GM12878 (cell line): ENCODE measurements at regions of chr9 and their contacts with region 1.

Region 1: GRCh38 chr9:137034863-137035761 is 3.2 kb upstream of the FUT7 start:
- DNase-seq: peak; percentile 55
- ATAC-seq: peak; percentile 89
- H3K4me3 ChIP-seq: peak overlapping the region; percentile 36; the same call in 1 of the 2 replicates
- H3K27ac ChIP-seq: no peak overlapping the region; the same call in 1 of the 2 replicates
- H3K4me1 ChIP-seq: peaks cover 34% of the 10 kb centered on the region
- H3K27me3 ChIP-seq: no peaks in the 10 kb centered on the region
- CTCF ChIP-seq: peak; percentile 90 to 97 (median 97)
- EP300 ChIP-seq: no peak; a peak in 1 of 4 replicates
- POLR2A ChIP-seq: no peak
- RAD21 ChIP-seq: peak; percentile 95

Region 2: DNA sequence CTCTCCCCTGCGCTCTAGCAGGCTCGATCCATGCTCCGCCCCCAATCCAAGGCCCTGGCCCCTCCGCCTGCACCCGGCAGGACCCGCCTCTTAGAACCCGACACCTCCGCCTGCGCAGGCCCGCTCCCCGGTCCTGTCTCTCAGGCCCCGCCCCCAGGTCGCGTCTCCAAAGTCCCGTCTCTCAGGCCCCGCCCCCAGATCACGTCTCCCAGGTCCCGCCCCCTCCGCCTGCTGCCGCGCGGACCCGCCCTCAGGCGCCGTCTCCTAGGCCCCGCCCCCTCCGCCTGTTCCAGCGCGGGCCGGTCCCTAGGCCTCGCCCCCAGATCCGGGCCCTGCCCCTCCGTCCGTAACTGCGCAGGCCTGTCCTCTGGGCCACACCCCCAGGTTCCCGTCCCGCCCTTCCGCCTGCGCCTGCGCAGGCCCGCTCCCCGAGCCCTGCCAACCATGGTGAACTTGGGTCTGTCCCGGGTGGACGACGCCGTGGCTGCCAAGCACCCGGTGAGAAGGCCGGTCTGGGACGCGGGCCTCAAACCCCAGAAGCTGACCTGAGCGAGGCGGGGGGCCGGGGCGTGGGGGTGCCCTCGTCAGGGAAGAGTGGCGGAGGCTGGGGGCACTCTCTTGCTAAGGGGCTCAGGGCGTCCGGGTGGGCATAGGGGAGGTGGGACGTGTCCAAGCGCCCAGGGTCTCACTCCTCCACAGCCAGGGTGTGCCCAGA is 244.0 kb before region 1 on chr9 and contains the start of gene TMEM141:
- CTCF ChIA-PET with region 1: interaction called, 61 read pairs
- POLR2A ChIA-PET with region 1: interaction called, 4 read pairs
- RAD21 ChIA-PET with region 1: interaction called, 28 read pairs
- SMC1A ChIA-PET with region 1: interaction called, 20 read pairs
- in situ Hi-C with region 1: loop called (anchors 5 kb)
- intact Hi-C with region 1: loop called (anchors 1 kb)
- DNase-seq: peak; percentile 92
- ATAC-seq: peak; percentile 94
- H3K4me3 ChIP-seq: peak within 1 kb of the TSS; percentile 77
- H3K27ac ChIP-seq: peak within 1 kb of the TSS; percentile 82
- H3K4me1 ChIP-seq: peaks cover 10% of the 10 kb centered on the region
- H3K27me3 ChIP-seq: no peaks in the 10 kb centered on the region
- CTCF ChIP-seq: no peak
- EP300 ChIP-seq: no peak
- POLR2A ChIP-seq: peak; percentile 83
- RAD21 ChIP-seq: no peak
- polyA plus RNA-seq, gene TMEM141: 7.8 to 13.3 TPM

Region 3: DNA sequence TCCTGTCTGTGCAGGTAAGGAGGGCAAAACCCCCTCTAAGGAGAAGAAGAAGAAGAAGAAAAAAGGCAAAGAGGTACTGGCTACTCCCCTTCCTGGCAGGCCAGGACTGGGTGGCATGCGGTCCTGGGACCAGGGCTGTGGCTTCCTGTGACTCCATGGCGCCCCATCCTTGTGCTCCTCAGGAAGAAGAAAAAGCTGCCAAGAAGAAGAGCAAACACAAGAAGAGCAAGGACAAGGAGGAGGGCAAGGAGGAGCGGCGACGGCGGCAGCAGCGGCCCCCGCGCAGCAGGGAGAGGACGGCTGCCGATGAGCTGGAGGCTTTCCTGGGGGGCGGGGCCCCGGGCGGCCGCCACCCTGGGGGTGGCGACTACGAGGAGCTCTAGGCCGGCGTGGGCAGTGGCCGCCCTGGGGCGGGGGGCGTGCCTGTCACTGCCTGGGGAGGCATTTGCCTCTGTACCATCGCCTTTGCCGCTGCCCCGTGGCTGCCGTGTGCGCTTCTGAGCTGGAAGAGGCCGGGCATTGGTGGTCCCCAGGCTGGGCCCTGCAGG is 194.9 kb before region 1 on chr9:
- CTCF ChIA-PET with region 1: interaction called, 35 read pairs
- POLR2A ChIA-PET with region 1: no interaction called
- RAD21 ChIA-PET with region 1: interaction called, 14 read pairs
- SMC1A ChIA-PET with region 1: no interaction called
- in situ Hi-C with region 1: no loop called
- intact Hi-C with region 1: loop called (anchors 5 kb)
- DNase-seq: no peak
- ATAC-seq: no peak
- H3K4me3 ChIP-seq: no peak overlapping the region
- H3K27ac ChIP-seq: no peak overlapping the region
- H3K4me1 ChIP-seq: peaks cover 6% of the 10 kb centered on the region; the same call in 1 of the 2 replicates
- H3K27me3 ChIP-seq: no peaks in the 10 kb centered on the region
- CTCF ChIP-seq: no peak
- EP300 ChIP-seq: no peak
- POLR2A ChIP-seq: no peak; the same call in 1 of the 2 replicates
- RAD21 ChIP-seq: no peak

Region 4: DNA sequence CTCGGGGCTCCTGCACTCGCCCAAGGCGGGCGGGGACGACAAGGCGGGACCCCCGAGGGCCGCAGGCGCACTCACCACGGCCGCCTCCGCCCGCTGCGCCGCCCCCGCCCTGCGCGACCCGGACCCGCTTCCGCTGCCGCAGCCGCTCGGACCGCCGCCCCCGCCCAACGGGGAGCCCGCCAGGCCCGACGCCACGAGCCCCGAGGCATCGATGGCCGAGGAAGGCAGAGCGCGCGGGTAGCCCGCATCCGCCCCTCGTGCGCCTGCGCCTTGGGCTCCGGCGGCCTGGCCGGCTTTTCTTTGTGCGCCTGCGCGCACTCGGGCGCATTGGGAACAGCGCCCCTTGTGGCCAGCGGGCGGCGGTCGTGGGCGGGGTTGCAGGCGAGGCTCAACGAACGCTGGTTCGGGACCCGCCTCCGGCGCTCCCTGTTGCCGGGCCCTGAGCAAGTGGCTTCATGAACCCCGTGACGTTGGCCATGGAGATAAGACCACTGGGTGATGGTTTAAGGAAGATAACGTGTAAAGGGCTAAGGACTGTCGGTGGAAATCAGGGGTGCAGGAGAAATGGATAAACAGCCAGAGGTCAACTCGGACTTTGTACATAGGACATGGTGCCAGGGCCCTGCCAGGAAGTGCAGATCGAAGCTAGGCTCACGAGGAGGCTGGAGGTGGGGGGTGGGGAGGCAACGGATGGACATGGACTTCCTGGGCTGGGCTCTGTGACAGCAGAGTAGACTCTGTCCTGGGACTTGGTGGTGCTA is 90.4 kb before region 1 on chr9 and contains the starts of genes C8G and FBXW5:
- CTCF ChIA-PET with region 1: interaction called, 163 read pairs
- POLR2A ChIA-PET with region 1: interaction called, 19 read pairs
- RAD21 ChIA-PET with region 1: interaction called, 109 read pairs
- SMC1A ChIA-PET with region 1: interaction called, 77 read pairs
- in situ Hi-C with region 1: loop called (anchors 5 kb)
- intact Hi-C with region 1: loop called (anchors 1 kb)
- DNase-seq: peak; percentile 72
- ATAC-seq: peak; percentile 78
- H3K4me3 ChIP-seq: peak within 1 kb of the TSS; percentile 98
- H3K27ac ChIP-seq: peak within 1 kb of the TSS; percentile 91
- H3K4me1 ChIP-seq: peaks cover 4% of the 10 kb centered on the region
- H3K27me3 ChIP-seq: no peaks in the 10 kb centered on the region
- CTCF ChIP-seq: peak; percentile 95 to 98 (median 98); a peak in 5 of 6 replicates
- EP300 ChIP-seq: 0 out of 4 replicates have a peak, but pooled peaks of 1 of the 2 experiments have one; percentile 35
- POLR2A ChIP-seq: no peak
- RAD21 ChIP-seq: peak; percentile 35; the same call in 1 of the 2 replicates
- polyA plus RNA-seq, gene C8G: not detected
- polyA plus RNA-seq, gene FBXW5: 0.21 to 1.4 TPM

Region 5: GRCh38 chr9:136985027-136985602 is 50.0 kb before region 1 on chr9:
- CTCF ChIA-PET with region 1: no interaction called
- POLR2A ChIA-PET with region 1: no interaction called
- RAD21 ChIA-PET with region 1: no interaction called
- SMC1A ChIA-PET with region 1: no interaction called
- in situ Hi-C with region 1: no loop called
- intact Hi-C with region 1: no loop called
- DNase-seq: no peak
- ATAC-seq: no peak
- H3K4me3 ChIP-seq: no peak overlapping the region
- H3K27ac ChIP-seq: no peak overlapping the region
- H3K4me1 ChIP-seq: no peaks in the 10 kb centered on the region
- H3K27me3 ChIP-seq: peaks cover 5 to 6% of the 10 kb centered on the region in 2 experiments
- CTCF ChIP-seq: no peak
- EP300 ChIP-seq: no peak
- POLR2A ChIP-seq: no peak
- RAD21 ChIP-seq: no peak

Region 6: GRCh38 chr9:137000177-137000883 is 34.8 kb before region 1 on chr9:
- CTCF ChIA-PET with region 1: interaction called, 17 read pairs
- POLR2A ChIA-PET with region 1: no interaction called
- RAD21 ChIA-PET with region 1: interaction called, 16 read pairs
- SMC1A ChIA-PET with region 1: interaction called, 6 read pairs
- in situ Hi-C with region 1: no loop called
- intact Hi-C with region 1: no loop called
- DNase-seq: peak; percentile 82
- ATAC-seq: peak; percentile 87
- H3K4me3 ChIP-seq: no peak overlapping the region
- H3K27ac ChIP-seq: no peak overlapping the region
- H3K4me1 ChIP-seq: peaks cover 37% of the 10 kb centered on the region
- H3K27me3 ChIP-seq: peaks cover 2 to 10% of the 10 kb centered on the region in 2 experiments; a peak in 3 of 4 replicates
- CTCF ChIP-seq: no peak
- EP300 ChIP-seq: peak; percentile 50 to 51; a peak in 2 of 4 replicates
- POLR2A ChIP-seq: no peak
- RAD21 ChIP-seq: no peak